Sciatic nerve (tissue), 2 donors: ENCODE measurements at regions of chr1 and their contacts with region 1.

Region 1: DNA sequence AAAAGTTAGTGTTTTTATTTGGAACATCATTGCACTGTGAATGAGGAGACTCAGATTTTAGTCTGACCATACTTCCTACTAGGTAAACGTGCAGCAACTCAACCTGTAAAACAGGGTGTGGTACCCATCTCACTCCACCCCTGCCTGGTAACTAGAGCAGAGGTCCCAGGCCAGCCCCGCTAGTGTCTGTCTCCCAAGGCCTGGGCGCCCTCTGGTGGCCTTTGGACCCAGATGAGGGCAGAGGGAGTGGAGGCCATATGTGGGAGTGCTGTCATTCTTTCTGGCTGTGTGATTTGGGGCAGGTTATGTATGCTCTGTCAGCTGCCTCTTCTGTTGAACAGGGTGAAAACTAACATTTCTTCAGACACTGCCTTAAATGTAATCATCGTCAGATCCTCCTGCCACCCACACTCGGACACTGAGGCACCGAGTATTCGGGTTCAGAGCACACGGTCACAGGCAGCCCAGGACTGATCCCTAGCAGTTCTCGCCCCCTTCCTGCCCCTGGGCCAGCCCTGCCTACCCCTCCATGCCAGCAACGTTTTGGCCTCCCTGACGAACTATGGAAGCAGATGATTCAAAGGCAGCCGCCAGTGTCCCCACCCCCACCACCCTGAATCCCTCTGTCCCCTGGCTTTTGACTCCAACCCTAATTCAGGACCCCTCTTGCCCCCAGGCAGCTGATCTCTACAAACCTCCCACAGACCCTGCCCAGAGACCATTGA is 76.0 kb downstream of the CD247 start:
- DNase-seq: peak; percentile 90
- ATAC-seq: peak; percentile 91

Region 2: GRCh38 chr1:166330096-166330495 is 1112.2 kb before region 1 on chr1:
- intact Hi-C with region 1: no loop called
- DNase-seq: no peak
- ATAC-seq: no peak

Region 3: DNA sequence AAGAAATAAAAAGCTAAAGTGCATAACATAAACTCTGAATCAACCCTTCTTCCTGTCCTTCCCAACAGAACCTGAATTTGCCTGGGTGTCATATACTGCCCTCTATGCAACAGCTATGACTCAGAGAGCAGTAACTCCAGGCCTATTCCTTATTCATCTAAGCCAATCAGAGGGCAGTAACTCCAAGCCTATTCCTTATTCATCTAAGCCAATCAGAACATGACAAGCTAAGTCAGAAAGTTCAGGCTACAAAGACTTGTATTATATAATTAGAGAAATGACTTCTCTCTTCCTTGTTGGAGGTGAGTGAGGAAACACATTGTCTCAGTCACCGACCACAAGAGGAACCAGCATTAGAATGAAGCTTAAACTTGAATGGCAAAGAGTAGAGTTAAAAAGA is 540.0 kb before region 1 on chr1:
- intact Hi-C with region 1: loop called (anchors 10 kb)
- DNase-seq: no peak
- ATAC-seq: no peak